HepG2 (cell line): ENCODE measurements at regions of chr20 and their contacts with region 1.

Region 1: GRCh38 chr20:51750037-51750763 is 18.0 kb downstream of the ATP9A start:
- DNase-seq: peak; percentile 96
- ATAC-seq: peak; percentile 85
- H3K4me3 ChIP-seq: no peak overlapping the region; a peak in 1 of 6 replicates
- H3K27ac ChIP-seq: peak overlapping the region; percentile 60
- H3K4me1 ChIP-seq: peaks cover 80% of the 10 kb centered on the region
- H3K27me3 ChIP-seq: no peaks in the 10 kb centered on the region
- CTCF ChIP-seq: no peak
- EP300 ChIP-seq: peak; percentile 68 to 85
- POLR2A ChIP-seq: no peak
- RAD21 ChIP-seq: peak; percentile 22; the same call in 1 of the 2 replicates

Region 2: GRCh38 chr20:51703400-51704287 is 46.6 kb before region 1 on chr20:
- CTCF ChIA-PET with region 1: no interaction called
- POLR2A ChIA-PET with region 1: interaction called, 9 read pairs
- in situ Hi-C with region 1: loop called (anchors 10 kb)
- intact Hi-C with region 1: no loop called
- DNase-seq: peak; percentile 99
- ATAC-seq: peak; percentile 94
- H3K4me3 ChIP-seq: peak overlapping the region in 2 of 3 experiments; percentile 4 to 18; a peak in 1 of 6 replicates
- H3K27ac ChIP-seq: peak overlapping the region; percentile 84
- H3K4me1 ChIP-seq: peaks cover 77% of the 10 kb centered on the region
- H3K27me3 ChIP-seq: no peaks in the 10 kb centered on the region
- CTCF ChIP-seq: no peak
- EP300 ChIP-seq: peak in 1 of 2 experiments; percentile 97; a peak in 2 of 4 replicates
- POLR2A ChIP-seq: no peak
- RAD21 ChIP-seq: 0 out of 2 replicates have a peak, but pooled peaks have one; percentile 20

Region 3: GRCh38 chr20:51725380-51726203 is 24.6 kb before region 1 on chr20:
- CTCF ChIA-PET with region 1: no interaction called
- POLR2A ChIA-PET with region 1: no interaction called
- in situ Hi-C with region 1: no loop called
- intact Hi-C with region 1: loop called (anchors 2 kb)
- DNase-seq: peak; percentile 88
- ATAC-seq: peak; percentile 91
- H3K4me3 ChIP-seq: no peak overlapping the region
- H3K27ac ChIP-seq: peak overlapping the region; percentile 10
- H3K4me1 ChIP-seq: peaks cover 52% of the 10 kb centered on the region
- H3K27me3 ChIP-seq: no peaks in the 10 kb centered on the region
- CTCF ChIP-seq: no peak
- EP300 ChIP-seq: no peak
- POLR2A ChIP-seq: no peak
- RAD21 ChIP-seq: no peak

Region 4: GRCh38 chr20:51760905-51761546 is 10.8 kb after region 1 on chr20:
- CTCF ChIA-PET with region 1: no interaction called
- POLR2A ChIA-PET with region 1: interaction called, 12 read pairs
- in situ Hi-C with region 1: no loop called
- intact Hi-C with region 1: loop called (anchors 1 kb)
- DNase-seq: peak; percentile 100
- ATAC-seq: peak; percentile 65
- H3K4me3 ChIP-seq: no peak overlapping the region; a peak in 1 of 6 replicates
- H3K27ac ChIP-seq: peak overlapping the region; percentile 57
- H3K4me1 ChIP-seq: peaks cover 57% of the 10 kb centered on the region
- H3K27me3 ChIP-seq: no peaks in the 10 kb centered on the region
- CTCF ChIP-seq: no peak; the same call in 1 of the 2 replicates
- EP300 ChIP-seq: peak; percentile 30 to 90; a peak in 3 of 4 replicates
- POLR2A ChIP-seq: no peak
- RAD21 ChIP-seq: no peak

Region 5: DNA sequence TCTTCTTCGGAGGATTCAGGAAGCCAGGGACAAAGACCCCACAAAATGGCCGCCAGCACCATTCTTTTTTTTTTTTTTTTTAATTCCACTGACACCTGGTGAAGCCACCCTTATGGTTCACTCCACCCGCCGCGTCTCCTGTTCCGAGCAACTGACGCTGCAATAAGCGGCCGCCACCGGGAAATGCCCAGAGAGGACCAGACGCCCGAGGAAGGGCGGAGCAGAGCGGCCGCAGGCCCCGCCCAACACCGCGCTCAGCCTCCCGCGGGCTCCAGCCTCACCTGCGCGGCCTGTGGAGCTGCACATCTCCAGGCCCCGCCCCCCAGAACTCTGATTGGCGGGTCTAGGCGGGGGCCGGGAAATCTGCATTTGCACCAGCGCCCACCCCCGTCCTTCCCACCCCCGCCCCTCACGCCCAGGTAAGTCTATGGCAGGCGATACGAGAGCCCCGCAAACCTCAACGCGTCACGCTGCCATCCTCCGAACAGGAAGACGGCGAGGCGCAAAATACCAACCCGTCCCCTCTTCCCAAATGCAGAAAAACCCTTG is 16.9 kb after region 1 on chr20:
- CTCF ChIA-PET with region 1: no interaction called
- POLR2A ChIA-PET with region 1: interaction called, 11 read pairs
- in situ Hi-C with region 1: no loop called
- intact Hi-C with region 1: no loop called
- DNase-seq: peak; percentile 83
- ATAC-seq: peak; percentile 94
- H3K4me3 ChIP-seq: peak overlapping the region; percentile 90 to 99 (median 98)
- H3K27ac ChIP-seq: peak overlapping the region; percentile 68
- H3K4me1 ChIP-seq: peaks cover 31% of the 10 kb centered on the region
- H3K27me3 ChIP-seq: peaks cover 0 to 12% of the 10 kb centered on the region in 2 experiments; a peak in 2 of 5 replicates
- CTCF ChIP-seq: no peak
- EP300 ChIP-seq: peak in 1 of 2 experiments; percentile 47; a peak in 2 of 4 replicates
- POLR2A ChIP-seq: peak; percentile 30 to 77; a peak in 3 of 4 replicates
- RAD21 ChIP-seq: peak; percentile 40; the same call in 1 of the 2 replicates